ENCODE measurements at regions of chr21 and their contacts with region 1.

Region 1: DNA sequence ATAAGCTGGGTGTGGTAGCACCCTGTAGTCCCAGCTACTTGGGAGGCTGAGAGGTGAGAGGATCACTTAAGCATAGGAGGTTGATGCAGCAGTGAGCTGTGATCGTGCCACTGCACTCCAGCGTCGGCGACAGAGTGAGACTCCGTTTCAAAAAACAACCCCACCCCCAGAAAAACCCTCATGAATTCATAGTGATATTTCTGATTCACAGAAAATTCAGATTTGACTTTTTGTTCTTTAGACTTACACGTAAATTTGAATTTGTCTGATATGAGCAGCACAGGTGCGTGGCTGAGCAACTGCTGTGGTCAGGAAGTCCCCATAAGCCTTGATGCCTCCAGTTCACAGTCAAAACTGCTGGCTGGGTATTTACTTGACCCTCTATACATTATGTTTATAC is 10.0 kb upstream of the MORC3 start:
- DNase-seq: peak in 1 of 5 donors; percentile 19
- H3K4me3 ChIP-seq: no peak overlapping the region
- H3K4me3 Mint-ChIP-seq: peak overlapping the region in 7 of 8 donors; percentile 22 to 69 (median 62)
- H3K27ac ChIP-seq: no peak overlapping the region
- H3K27ac Mint-ChIP-seq: peak overlapping the region; percentile 4 to 83 (median 47)
- H3K4me1 ChIP-seq: peaks cover 10% of the 10 kb centered on the region
- H3K4me1 Mint-ChIP-seq: peaks cover 4 to 6% (median 5%) of the 10 kb centered on the region in 4 donors
- H3K27me3 ChIP-seq: no peaks in the 10 kb centered on the region
- H3K27me3 Mint-ChIP-seq: no peaks in the 10 kb centered on the region

Region 2: DNA sequence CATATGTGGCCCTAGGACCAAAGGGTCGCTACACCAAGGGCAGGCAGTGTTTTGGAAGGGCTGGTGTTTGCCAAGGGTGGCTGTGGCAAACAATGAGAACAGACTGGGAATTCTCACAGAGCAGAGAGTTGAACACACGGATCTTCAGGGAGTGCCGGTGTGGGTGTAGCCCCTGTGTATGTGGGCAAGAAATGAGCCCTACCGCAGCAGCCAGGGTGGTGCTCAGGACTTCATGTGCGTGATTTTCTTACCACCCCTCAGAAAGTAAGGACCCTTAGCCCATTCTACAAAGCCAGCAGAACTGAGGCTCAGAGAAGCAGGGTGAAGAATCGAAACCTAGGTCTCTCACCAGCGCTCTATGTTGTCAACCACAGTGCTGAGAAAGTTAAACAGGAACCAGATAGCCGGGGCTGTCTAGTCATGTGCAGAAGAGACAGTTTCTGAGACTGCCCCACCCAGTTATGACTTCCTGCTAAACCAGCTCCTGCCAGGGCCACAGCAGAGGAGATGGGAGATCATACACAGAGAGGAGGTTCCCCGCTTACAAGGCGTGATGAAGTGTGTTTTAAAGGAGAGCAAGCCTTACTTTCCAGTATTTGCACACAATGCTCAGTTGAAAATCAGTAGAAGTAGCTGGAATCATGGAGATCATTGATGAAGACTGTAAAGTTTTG is 12.0 kb before region 1 on chr21:
- CTCF ChIA-PET with region 1: interaction called, 3 read pairs
- POLR2A ChIA-PET with region 1: interaction called, 12 read pairs
- intact Hi-C with region 1: no loop called
- DNase-seq: peak; percentile 81 to 91 (median 84)
- H3K4me3 ChIP-seq: peak overlapping the region; percentile 17 to 52
- H3K4me3 Mint-ChIP-seq: peak overlapping the region; percentile 77 to 89 (median 84)
- H3K27ac ChIP-seq: peak overlapping the region; percentile 79
- H3K27ac Mint-ChIP-seq: peak overlapping the region; percentile 89 to 99 (median 96)
- H3K4me1 ChIP-seq: peaks cover 37% of the 10 kb centered on the region
- H3K4me1 Mint-ChIP-seq: peaks cover 26 to 40% (median 34%) of the 10 kb centered on the region in 4 donors
- H3K27me3 ChIP-seq: no peaks in the 10 kb centered on the region
- H3K27me3 Mint-ChIP-seq: no peaks in the 10 kb centered on the region

Region 3: DNA sequence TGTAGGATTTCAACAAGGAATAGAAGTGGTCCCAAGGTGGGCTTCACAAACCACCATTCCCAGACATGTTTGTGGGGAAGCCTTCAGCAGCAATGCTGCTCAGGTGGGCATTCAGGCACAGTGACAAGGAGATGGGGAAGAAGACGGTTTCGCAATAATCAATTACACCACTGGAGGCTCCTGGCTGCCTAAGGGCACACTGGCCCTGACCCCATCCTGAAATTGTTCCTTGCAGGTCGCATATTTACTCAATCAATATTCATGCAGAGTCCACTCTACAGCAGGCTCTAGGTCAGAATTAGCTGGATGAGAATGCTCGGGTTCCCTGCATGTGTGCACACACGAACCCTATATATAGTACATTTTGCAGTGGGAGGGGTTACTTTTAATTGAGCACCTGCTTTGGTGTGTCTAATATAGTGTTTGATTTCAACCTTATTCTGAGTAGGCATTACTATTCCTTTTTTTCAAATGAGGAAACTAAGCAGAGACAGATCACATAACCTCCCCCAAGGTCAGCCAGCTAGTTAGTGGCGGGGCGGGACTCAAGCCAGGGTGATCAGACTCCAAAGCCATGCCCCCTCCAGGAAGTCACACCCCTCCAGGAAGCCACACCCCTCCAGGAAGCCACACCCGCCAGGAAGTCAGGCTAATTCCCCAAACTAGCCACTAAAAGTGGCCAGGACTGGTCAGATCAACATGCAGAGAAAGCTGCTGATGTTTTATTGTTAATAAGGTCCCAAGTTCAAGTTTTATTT is 549.9 kb after region 1 on chr21:
- CTCF ChIA-PET with region 1: no interaction called
- POLR2A ChIA-PET with region 1: no interaction called
- intact Hi-C with region 1: no loop called
- DNase-seq: peak in 2 of 5 donors; percentile 7 to 8
- H3K4me3 ChIP-seq: no peak overlapping the region
- H3K4me3 Mint-ChIP-seq: peak overlapping the region in 6 of 8 donors; percentile 15 to 62 (median 24)
- H3K27ac ChIP-seq: no peak overlapping the region
- H3K27ac Mint-ChIP-seq: peak overlapping the region in 1 of 7 donors; percentile 4
- H3K4me1 ChIP-seq: peaks cover 14% of the 10 kb centered on the region
- H3K4me1 Mint-ChIP-seq: peaks cover 12 to 28% (median 18%) of the 10 kb centered on the region in 4 donors
- H3K27me3 ChIP-seq: no peaks in the 10 kb centered on the region
- H3K27me3 Mint-ChIP-seq: no peaks in the 10 kb centered on the region